ENCODE measurements at regions of chr19 and their contacts with region 1.

Region 1: GRCh38 chr19:34328982-34329381 is 36.0 kb upstream of the GPI start:
- DNase-seq: peak in 1 of 2 experiments; percentile 58
- H3K4me3 ChIP-seq: no peak overlapping the region
- H3K27ac ChIP-seq: no peak overlapping the region; the same call in 1 of the 2 replicates
- H3K4me1 ChIP-seq: peaks cover 12% of the 10 kb centered on the region; the same call in 1 of the 2 replicates
- H3K27me3 ChIP-seq: no peaks in the 10 kb centered on the region
- CTCF ChIP-seq: no peak

Region 2: GRCh38 chr19:34298891-34299520 is 30.0 kb before region 1 on chr19:
- CTCF ChIA-PET with region 1: no interaction called
- POLR2A ChIA-PET with region 1: no interaction called
- intact Hi-C with region 1: no loop called
- DNase-seq: no peak
- H3K4me3 ChIP-seq: no peak overlapping the region
- H3K27ac ChIP-seq: no peak overlapping the region
- H3K4me1 ChIP-seq: no peaks in the 10 kb centered on the region
- H3K27me3 ChIP-seq: no peaks in the 10 kb centered on the region
- CTCF ChIP-seq: no peak

Region 3: GRCh38 chr19:34404109-34404897 is 75.3 kb after region 1 on chr19 and contains the start of gene PDCD2L:
- CTCF ChIA-PET with region 1: no interaction called
- POLR2A ChIA-PET with region 1: interaction called, 12 read pairs
- intact Hi-C with region 1: no loop called
- DNase-seq: peak; percentile 75 to 87
- H3K4me3 ChIP-seq: peak within 1 kb of the TSS; percentile 97
- H3K27ac ChIP-seq: peak within 1 kb of the TSS; percentile 37; the same call in 1 of the 2 replicates
- H3K4me1 ChIP-seq: peaks cover 5% of the 10 kb centered on the region; the same call in 1 of the 2 replicates
- H3K27me3 ChIP-seq: no peaks in the 10 kb centered on the region
- CTCF ChIP-seq: no peak
- total RNA-seq, gene PDCD2L: 14.8 and 20.9 TPM in 2 replicates

Measured in PC-9 (cell line).